SK-N-SH (cell line): ENCODE measurements at regions of chr9 and their contacts with region 1.

Region 1: GRCh38 chr9:133149126-133150107 is 14.3 kb downstream of the GBGT1 start:
- DNase-seq: peak; percentile 98
- H3K4me3 ChIP-seq: peak overlapping the region in 1 of 2 experiments; percentile 81; a peak in 2 of 4 replicates
- H3K27ac ChIP-seq: peak overlapping the region; percentile 35 to 80
- H3K4me1 ChIP-seq: peaks cover 0 to 24% of the 10 kb centered on the region in 2 experiments; a peak in 2 of 4 replicates
- H3K27me3 ChIP-seq: no peaks in the 10 kb centered on the region
- CTCF ChIP-seq: peak; percentile 43
- EP300 ChIP-seq: no peak
- RAD21 ChIP-seq: peak; percentile 41; the same call in 1 of the 2 replicates

Region 2: DNA sequence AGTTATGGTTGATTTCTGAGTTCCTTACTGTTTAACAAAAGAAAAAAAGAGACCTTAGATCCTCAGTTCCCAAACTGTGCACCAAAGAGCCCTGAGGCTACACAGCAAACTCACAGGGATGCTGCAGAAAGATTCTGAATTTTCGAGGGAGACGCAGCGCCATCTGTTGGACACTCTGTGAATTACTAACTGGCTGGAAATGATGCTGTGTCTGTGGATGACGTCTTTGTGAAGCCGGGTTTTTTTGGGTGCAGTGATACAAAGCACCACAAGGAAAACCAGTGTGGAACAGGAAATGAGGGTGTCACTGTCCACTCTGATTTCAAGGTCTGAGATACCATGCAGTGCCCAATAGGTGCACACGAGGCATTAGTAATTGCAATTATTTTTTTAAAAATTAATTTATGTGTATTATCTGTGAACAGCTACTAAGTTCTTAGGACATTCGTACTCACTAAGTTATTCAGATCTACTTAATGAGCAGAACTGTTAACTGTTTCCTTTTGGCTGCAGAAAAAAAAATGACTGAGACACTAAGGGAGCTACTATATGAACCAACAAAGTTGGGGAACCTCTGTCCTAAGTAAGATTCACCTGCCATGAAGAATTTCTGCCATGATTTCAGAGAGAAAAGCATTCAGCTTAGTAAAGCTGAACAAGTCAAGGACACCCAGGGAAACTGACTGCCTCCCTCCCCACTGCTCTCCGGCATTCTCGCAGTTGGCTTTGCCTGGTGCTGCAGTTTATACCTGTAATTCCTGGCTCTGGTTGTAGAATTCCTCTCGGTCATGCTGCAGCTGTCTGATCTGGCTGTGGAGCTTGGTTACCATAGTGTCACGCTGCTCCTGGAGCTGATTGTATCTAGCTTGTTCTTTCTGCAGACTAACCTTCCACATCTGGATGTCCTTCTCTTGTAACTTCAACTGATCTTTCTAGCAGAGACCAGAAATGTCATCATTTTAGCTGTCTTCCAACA is 247.3 kb before region 1 on chr9:
- CTCF ChIA-PET with region 1: no interaction called
- POLR2A ChIA-PET with region 1: no interaction called
- DNase-seq: peak; percentile 84
- H3K4me3 ChIP-seq: no peak overlapping the region; a peak in 1 of 4 replicates
- H3K27ac ChIP-seq: peak overlapping the region in 1 of 2 experiments; percentile 26; a peak in 2 of 4 replicates
- H3K4me1 ChIP-seq: peaks cover 0 to 7% of the 10 kb centered on the region in 2 experiments; a peak in 1 of 4 replicates
- H3K27me3 ChIP-seq: no peaks in the 10 kb centered on the region
- CTCF ChIP-seq: peak; percentile 97
- EP300 ChIP-seq: no peak
- RAD21 ChIP-seq: peak; percentile 87

Region 3: GRCh38 chr9:133030317-133031129 is 118.9 kb before region 1 on chr9 and contains the start of gene GTF3C5:
- CTCF ChIA-PET with region 1: interaction called, 216 read pairs
- POLR2A ChIA-PET with region 1: interaction called, 10 read pairs
- DNase-seq: peak; percentile 98
- H3K4me3 ChIP-seq: peak within 1 kb of the TSS; percentile 89 to 97
- H3K27ac ChIP-seq: peak within 1 kb of the TSS; percentile 82 to 96
- H3K4me1 ChIP-seq: peaks cover 10 to 13% of the 10 kb centered on the region in 2 experiments; a peak in 2 of 4 replicates
- H3K27me3 ChIP-seq: no peaks in the 10 kb centered on the region
- CTCF ChIP-seq: no peak
- EP300 ChIP-seq: no peak
- RAD21 ChIP-seq: no peak
- polyA plus RNA-seq, gene GTF3C5: 57.3 and 59.1 TPM in 2 replicates

Region 4: DNA sequence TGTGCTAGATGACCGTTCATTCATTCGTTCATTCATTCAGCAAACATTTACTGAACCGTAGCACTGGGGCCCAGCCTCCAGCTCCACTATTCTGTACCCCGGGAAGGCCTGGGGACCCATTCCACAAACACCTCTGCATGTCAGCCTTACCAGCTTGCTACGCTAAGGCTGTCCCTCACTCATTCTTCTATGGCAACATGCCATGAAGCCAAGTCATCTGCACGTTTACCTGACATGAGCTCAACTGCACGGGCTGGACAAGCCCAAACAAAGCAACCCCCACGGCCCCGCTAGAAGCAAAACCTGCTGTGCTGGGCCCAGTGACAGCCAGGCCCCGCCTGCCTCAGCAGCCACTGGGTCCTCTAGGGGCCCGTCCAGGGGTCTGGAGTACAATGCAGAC is 81.6 kb before region 1 on chr9:
- CTCF ChIA-PET with region 1: interaction called, 10 read pairs
- POLR2A ChIA-PET with region 1: no interaction called
- DNase-seq: no peak
- H3K4me3 ChIP-seq: no peak overlapping the region
- H3K27ac ChIP-seq: no peak overlapping the region
- H3K4me1 ChIP-seq: no peaks in the 10 kb centered on the region
- H3K27me3 ChIP-seq: no peaks in the 10 kb centered on the region
- CTCF ChIP-seq: no peak
- EP300 ChIP-seq: no peak
- RAD21 ChIP-seq: no peak

Region 5: DNA sequence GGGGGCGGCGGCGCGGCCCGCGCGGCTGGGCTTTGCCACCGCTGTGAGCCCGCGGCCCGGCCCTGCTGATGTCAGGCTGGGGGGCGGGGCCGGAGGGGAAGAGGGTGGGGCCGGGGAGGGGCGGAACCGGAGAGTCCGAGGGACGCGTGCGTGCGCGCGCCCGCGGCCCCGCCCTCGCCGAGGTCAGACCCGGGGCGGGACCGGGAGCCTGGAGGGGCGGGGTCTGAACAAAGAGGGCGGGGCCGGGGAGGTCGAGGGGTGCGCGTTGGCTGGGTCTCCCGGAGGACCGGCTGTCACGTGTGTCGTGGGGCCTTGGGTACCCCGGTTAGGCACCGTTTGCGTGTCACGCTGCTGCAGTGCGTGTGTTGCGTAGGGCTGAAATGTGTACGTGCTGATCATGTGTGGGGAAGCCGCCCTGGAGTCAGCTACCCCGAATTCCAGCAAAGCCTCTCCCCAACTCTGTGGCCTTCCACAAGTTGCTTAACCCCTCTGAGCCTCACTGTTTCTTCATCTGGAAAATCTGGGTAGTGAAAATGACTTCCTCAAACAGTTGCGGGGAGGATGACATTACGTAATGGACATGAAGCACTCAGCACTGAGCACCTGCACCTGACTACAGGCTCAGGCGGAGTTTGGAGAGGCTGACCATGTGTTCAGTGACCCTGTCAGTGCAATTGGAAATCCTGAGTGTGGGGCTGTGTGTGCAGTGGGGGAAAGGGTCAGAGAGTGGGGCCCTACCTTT is 28.0 kb before region 1 on chr9 and contains the start of gene RALGDS:
- CTCF ChIA-PET with region 1: interaction called, 810 read pairs
- POLR2A ChIA-PET with region 1: interaction called, 21 read pairs
- DNase-seq: peak; percentile 97
- H3K4me3 ChIP-seq: peak within 1 kb of the TSS; percentile 71 to 79
- H3K27ac ChIP-seq: peak within 1 kb of the TSS in 1 of 2 experiments; percentile 99; a peak in 3 of 4 replicates
- H3K4me1 ChIP-seq: peaks cover 18 to 65% of the 10 kb centered on the region in 2 experiments
- H3K27me3 ChIP-seq: no peaks in the 10 kb centered on the region
- CTCF ChIP-seq: no peak
- EP300 ChIP-seq: no peak
- RAD21 ChIP-seq: no peak
- polyA plus RNA-seq, gene RALGDS: 64.1 and 64.7 TPM in 2 replicates

Region 6: DNA sequence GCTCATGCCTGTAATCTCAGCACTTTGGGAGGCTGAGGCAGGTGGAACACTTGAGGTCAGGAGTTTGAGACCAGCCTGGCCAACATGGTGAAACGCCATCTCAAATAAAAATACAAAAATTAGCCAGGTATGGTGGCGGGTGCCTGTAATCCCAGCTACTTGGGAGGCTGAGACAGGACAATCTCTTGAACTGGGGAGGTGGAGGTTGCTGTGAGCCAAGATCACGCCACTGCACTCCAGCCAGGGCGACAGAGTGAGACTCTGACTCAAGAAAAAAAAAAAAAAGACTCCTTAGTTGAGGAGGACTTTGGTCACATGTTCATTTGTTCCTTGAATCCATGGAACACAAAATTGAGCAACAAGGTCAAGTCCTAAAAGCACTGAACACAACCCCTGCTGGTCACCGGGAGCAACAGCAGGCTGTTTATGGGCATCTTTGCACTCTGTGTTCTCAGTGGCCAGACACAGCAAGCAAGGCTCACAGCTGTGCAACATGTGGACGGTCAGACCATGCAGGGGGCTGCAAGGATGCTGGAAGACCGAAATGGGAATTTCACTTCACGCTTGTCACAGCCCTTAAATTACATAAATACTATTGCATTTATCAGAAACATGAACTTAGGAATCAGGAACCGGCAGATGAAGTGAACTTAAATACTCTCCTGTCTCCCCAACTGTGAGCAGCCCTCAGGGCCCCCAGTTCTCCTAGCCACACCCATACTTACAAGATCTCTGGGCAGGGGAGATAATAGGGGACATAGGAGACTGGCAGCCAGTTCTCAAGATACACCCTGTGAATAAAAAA is 11.5 kb after region 1 on chr9:
- CTCF ChIA-PET with region 1: interaction called, 42 read pairs
- POLR2A ChIA-PET with region 1: no interaction called
- DNase-seq: peak; percentile 88
- H3K4me3 ChIP-seq: no peak overlapping the region
- H3K27ac ChIP-seq: no peak overlapping the region
- H3K4me1 ChIP-seq: peaks cover 0 to 5% of the 10 kb centered on the region in 2 experiments; a peak in 1 of 4 replicates
- H3K27me3 ChIP-seq: no peaks in the 10 kb centered on the region
- CTCF ChIP-seq: peak; percentile 70
- EP300 ChIP-seq: no peak
- RAD21 ChIP-seq: peak; percentile 50; the same call in 1 of the 2 replicates